ENCODE measurements at regions of chr16 and their contacts with region 1.

Region 1: GRCh38 chr16:57413301-57413730 is 8.7 kb downstream of the CCL17 start:
- DNase-seq: no peak
- H3K4me3 ChIP-seq: no peak overlapping the region
- H3K27ac ChIP-seq: no peak overlapping the region
- H3K4me1 ChIP-seq: peaks cover 23% of the 10 kb centered on the region
- H3K27me3 ChIP-seq: peaks cover 14% of the 10 kb centered on the region
- CTCF ChIP-seq: no peak

Region 2: GRCh38 chr16:57277586-57277985 is 135.7 kb before region 1 on chr16:
- dilution Hi-C with region 1: no loop called
- DNase-seq: peak; percentile 91
- H3K4me3 ChIP-seq: no peak overlapping the region
- H3K27ac ChIP-seq: peak overlapping the region; percentile 91
- H3K4me1 ChIP-seq: peaks cover 39% of the 10 kb centered on the region
- H3K27me3 ChIP-seq: no peaks in the 10 kb centered on the region
- CTCF ChIP-seq: no peak

Region 3: DNA sequence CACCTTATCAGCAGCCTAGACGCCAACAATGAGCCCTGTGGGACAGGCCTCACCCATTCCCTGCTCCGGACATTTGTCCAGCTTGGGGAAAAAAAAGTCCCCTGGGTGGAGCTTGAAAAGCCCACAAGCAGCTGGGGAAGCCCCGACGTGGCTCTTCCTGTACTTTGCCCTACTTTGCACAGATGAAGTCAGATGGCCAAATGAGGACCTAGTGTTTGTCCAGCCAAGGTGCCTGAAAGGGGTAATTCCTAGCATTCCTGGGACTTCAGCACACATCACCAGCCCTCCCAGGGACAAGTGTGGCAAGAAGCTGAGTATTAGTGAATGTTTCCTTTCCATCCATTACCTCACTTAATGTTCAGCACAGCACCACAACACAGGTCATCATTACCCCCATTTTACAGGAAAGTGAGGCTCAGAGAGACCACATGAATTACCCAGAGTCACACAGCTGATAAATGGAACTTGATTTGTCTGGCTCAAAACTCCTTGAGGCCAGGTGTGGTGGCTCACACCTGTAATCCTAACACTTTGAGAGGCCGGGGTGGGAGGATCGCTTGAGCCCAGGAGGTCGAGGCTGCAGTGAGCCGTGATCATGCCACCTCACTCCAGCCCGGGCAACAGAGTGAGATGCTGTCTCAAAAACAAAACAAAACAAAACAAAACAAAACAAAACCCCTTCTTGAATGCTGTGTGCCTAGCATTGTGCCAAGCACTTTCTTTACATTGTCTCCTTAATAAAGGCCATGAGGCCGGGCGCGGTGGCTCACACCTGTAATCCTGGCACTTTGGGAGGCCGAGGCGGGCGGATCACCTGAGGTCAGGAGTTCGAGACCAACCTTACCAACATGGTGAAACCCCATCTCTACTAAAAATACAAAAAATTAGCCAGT is 108.9 kb before region 1 on chr16:
- dilution Hi-C with region 1: loop called (anchors 5 kb)
- DNase-seq: no peak
- H3K4me3 ChIP-seq: no peak overlapping the region
- H3K27ac ChIP-seq: no peak overlapping the region
- H3K4me1 ChIP-seq: peaks cover 8% of the 10 kb centered on the region
- H3K27me3 ChIP-seq: peaks cover 5% of the 10 kb centered on the region
- CTCF ChIP-seq: no peak

Region 4: DNA sequence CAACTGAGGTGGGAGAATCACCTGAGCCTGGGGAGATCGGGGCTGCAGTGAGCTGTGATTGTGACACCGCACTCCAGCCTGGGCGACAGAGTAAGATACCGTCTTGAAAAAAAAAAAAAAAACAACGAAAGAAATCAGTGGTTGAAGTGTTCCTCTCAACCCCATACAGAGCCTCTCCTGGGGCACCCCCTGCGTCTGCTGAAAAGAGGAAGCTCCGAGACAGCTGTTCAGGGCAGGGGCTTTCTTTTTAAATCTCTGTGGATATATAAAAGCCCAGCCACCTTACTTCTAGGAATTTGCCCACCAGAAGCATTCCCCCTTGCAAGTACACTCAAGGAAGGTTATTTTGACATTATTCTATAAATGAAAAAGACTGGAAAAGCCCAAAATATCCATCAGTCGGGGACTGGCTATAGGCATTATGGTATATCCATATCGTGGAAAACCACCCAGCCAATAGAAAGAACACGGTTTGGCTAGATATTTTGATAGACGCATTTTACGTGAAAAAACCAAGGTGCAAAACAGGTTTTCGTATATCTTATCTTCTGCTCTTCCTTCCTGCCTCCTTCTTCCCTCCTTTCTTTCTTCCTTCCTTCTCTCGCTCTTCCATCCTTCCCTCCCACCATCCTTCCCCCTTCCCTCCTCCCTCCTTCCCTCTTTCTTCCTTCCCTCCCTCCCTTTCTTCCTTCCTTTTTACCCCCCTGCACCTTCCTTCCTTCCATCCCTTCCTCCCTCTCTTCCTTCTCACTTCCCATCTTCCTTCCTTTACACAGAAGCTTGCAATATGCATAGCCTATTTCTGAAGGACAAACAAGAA is 63.9 kb before region 1 on chr16:
- dilution Hi-C with region 1: loop called (anchors 10 kb)
- DNase-seq: no peak
- H3K4me3 ChIP-seq: no peak overlapping the region
- H3K27ac ChIP-seq: no peak overlapping the region
- H3K4me1 ChIP-seq: no peaks in the 10 kb centered on the region
- H3K27me3 ChIP-seq: peaks cover 5% of the 10 kb centered on the region
- CTCF ChIP-seq: no peak

Region 5: GRCh38 chr16:57372372-57373116 is 40.8 kb before region 1 on chr16 and contains the start of gene CX3CL1:
- dilution Hi-C with region 1: no loop called
- DNase-seq: no peak
- H3K4me3 ChIP-seq: peak within 1 kb of the TSS in 1 of 3 experiments; percentile 29
- H3K27ac ChIP-seq: no peak within 1 kb of the TSS
- H3K4me1 ChIP-seq: peaks cover 38% of the 10 kb centered on the region
- H3K27me3 ChIP-seq: no peaks in the 10 kb centered on the region
- CTCF ChIP-seq: no peak
- polyA plus RNA-seq, gene CX3CL1: 0.45 to 0.71 TPM (median 0.47 TPM) in 3 replicates

Region 6: GRCh38 chr16:57535680-57536305 is 122.5 kb after region 1 on chr16:
- dilution Hi-C with region 1: no loop called
- DNase-seq: peak; percentile 36
- H3K4me3 ChIP-seq: peak overlapping the region; percentile 65 to 83 (median 77)
- H3K27ac ChIP-seq: peak overlapping the region; percentile 54
- H3K4me1 ChIP-seq: peaks cover 12% of the 10 kb centered on the region
- H3K27me3 ChIP-seq: no peaks in the 10 kb centered on the region
- CTCF ChIP-seq: peak in 1 of 3 experiments; percentile 15

Region 7: GRCh38 chr16:57653936-57654335 is 240.6 kb after region 1 on chr16:
- dilution Hi-C with region 1: no loop called
- DNase-seq: no peak
- H3K4me3 ChIP-seq: no peak overlapping the region
- H3K27ac ChIP-seq: no peak overlapping the region
- H3K4me1 ChIP-seq: peaks cover 19% of the 10 kb centered on the region
- H3K27me3 ChIP-seq: no peaks in the 10 kb centered on the region
- CTCF ChIP-seq: no peak